ENCODE measurements at regions of chr12 and their contacts with region 1.

Region 1: DNA sequence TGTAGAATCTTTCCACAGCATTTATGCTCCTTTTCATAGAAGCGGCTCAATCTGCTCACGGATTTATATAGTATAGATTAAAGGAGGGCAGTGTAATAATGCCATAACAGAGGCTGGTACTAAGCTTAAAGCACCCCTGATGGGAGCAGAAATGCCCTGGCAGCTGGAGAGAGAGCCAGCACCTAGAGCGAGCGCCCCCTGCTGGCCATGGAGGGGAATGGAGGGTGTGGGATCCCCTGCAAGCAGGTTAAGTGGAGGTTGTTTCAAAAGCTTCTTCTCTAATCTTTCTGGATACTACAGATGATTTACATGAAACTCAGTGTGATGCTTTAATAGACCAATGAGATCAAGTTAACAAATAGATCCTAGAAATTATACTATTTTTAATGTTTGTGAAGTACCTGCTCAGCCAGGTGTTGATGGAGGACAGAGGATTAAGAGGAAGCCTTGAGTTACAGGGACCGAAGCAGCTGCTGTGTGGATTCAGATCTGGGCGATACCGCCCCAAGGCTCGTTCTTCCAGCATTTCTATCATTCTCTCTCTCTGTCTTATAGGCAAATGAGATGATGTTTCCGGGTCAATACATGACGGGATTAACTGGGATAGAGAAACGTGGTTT is 1519.3 kb upstream of the TMEM132C start:
- DNase-seq: peak; percentile 72
- H3K4me3 Mint-ChIP-seq: no peak overlapping the region
- H3K27ac Mint-ChIP-seq: no peak overlapping the region
- H3K4me1 Mint-ChIP-seq: peaks cover 3% of the 10 kb centered on the region
- H3K27me3 Mint-ChIP-seq: no peaks in the 10 kb centered on the region

Region 2: DNA sequence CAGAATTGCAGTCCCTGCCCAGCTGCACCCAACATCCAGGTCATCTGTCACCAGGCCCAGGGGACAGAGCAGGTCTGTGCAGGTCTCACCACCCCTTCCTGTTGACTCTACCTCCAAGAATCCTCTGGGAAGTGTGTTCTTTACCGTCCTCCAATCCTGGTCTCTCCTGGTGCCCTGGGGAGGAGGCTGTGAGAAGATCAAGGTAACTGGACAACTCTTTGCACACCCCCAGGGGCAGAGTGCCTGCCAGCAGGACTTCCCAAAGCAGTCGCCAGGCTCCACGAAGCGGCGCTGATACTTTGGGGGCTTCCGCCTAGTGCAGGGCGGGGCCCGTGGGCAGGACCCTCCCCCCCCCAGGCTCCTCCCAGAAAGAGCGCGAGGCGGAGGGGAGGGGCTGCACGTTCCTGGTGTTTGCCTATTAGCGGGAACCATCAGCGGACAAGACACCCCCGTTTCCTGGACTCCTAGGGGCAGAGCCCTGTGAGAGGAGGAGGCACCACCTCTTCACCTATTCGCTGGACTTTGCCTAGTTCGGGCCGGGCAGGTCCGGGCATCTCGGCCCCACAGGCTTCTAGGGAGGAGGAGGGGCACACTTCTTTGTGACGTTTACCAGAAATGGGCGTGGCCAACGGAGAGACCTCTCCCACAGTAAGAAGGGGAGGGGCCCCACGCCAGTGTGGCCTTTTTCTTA is 764.4 kb before region 1 on chr12:
- CTCF ChIA-PET with region 1: no interaction called
- POLR2A ChIA-PET with region 1: no interaction called
- intact Hi-C with region 1: no loop called
- DNase-seq: no peak
- H3K4me3 Mint-ChIP-seq: no peak overlapping the region
- H3K27ac Mint-ChIP-seq: no peak overlapping the region
- H3K4me1 Mint-ChIP-seq: no peaks in the 10 kb centered on the region
- H3K27me3 Mint-ChIP-seq: peaks cover 8% of the 10 kb centered on the region

Region 3: DNA sequence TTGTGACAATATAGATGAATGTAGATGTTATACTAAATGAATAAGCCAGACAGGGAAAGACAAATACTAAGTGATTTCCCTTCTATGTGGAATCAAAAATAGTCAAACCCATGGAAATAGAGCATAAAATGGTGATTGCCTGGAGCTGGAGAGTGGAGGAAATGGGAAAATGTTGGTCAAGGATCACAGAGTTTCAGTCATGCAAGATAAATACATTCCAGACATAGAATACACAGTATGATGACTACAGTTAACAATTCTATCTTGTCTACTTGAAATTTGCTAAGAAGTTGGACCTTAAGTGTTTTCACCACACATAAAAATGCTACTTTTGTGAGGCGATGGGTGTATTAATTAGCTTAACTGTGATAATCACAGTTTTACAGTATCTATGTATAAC is 499.7 kb before region 1 on chr12:
- CTCF ChIA-PET with region 1: no interaction called
- POLR2A ChIA-PET with region 1: no interaction called
- intact Hi-C with region 1: no loop called
- DNase-seq: no peak
- H3K4me3 Mint-ChIP-seq: no peak overlapping the region
- H3K27ac Mint-ChIP-seq: no peak overlapping the region
- H3K4me1 Mint-ChIP-seq: no peaks in the 10 kb centered on the region
- H3K27me3 Mint-ChIP-seq: no peaks in the 10 kb centered on the region

Region 4: GRCh38 chr12:126726481-126727217 is 21.0 kb before region 1 on chr12:
- CTCF ChIA-PET with region 1: interaction called, 12 read pairs
- POLR2A ChIA-PET with region 1: no interaction called
- intact Hi-C with region 1: no loop called
- DNase-seq: no peak
- H3K4me3 Mint-ChIP-seq: no peak overlapping the region
- H3K27ac Mint-ChIP-seq: no peak overlapping the region
- H3K4me1 Mint-ChIP-seq: peaks cover 6% of the 10 kb centered on the region
- H3K27me3 Mint-ChIP-seq: peaks cover 31% of the 10 kb centered on the region

Region 5: DNA sequence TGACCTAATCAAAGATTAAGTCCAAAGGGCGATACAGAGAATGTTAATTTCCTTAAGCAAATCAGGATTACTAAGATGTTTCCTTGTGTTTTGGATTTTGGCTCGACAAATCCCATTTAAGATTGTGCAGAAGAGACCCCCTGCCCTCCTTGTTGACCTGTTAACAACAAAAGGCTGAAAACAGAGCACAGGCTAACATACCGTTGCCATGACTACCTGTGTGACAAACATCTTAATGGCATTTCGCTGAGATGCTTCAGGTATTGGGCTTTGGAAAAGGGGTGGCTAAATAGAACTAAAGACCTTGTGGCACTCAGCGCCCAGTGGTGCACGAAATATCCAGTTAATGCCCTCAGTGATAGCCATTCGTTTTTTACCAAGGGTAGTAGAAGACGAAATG is 12.9 kb before region 1 on chr12:
- CTCF ChIA-PET with region 1: interaction called, 13 read pairs
- POLR2A ChIA-PET with region 1: no interaction called
- intact Hi-C with region 1: no loop called
- DNase-seq: no peak
- H3K4me3 Mint-ChIP-seq: no peak overlapping the region
- H3K27ac Mint-ChIP-seq: no peak overlapping the region
- H3K4me1 Mint-ChIP-seq: no peaks in the 10 kb centered on the region
- H3K27me3 Mint-ChIP-seq: no peaks in the 10 kb centered on the region

Region 6: GRCh38 chr12:126761420-126761819 is 13.8 kb after region 1 on chr12:
- CTCF ChIA-PET with region 1: interaction called, 17 read pairs
- POLR2A ChIA-PET with region 1: no interaction called
- intact Hi-C with region 1: no loop called
- DNase-seq: no peak
- H3K4me3 Mint-ChIP-seq: no peak overlapping the region
- H3K27ac Mint-ChIP-seq: peak overlapping the region; percentile 74
- H3K4me1 Mint-ChIP-seq: peaks cover 41% of the 10 kb centered on the region
- H3K27me3 Mint-ChIP-seq: no peaks in the 10 kb centered on the region

Region 7: DNA sequence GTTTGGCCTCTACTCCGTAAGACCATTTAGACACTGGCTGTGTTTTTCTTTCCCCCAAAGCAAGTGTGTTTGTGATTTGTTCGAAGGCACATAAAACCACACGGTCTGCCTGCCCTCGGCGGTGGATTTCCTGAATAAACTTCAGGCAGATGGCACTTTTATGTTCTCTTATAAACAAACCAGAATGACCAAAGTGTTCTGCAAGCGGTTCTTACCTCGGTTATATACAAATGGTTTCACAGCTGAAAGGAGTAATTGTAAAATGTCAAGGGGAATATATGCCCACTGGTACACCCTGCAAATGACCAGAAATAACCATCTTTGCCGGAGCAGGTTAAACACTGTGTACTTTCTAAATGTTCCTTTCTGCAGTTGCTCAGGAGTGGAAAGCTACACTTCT is 43.5 kb after region 1 on chr12:
- CTCF ChIA-PET with region 1: interaction called, 10 read pairs
- POLR2A ChIA-PET with region 1: no interaction called
- intact Hi-C with region 1: no loop called
- DNase-seq: no peak
- H3K4me3 Mint-ChIP-seq: no peak overlapping the region
- H3K27ac Mint-ChIP-seq: no peak overlapping the region
- H3K4me1 Mint-ChIP-seq: no peaks in the 10 kb centered on the region
- H3K27me3 Mint-ChIP-seq: no peaks in the 10 kb centered on the region

Measured in activated CD4-positive, alpha-beta memory T cell treated with anti-CD3 and anti-CD28 coated beads for 36 hours (primary cell).